Heart right ventricle (tissue), 16 donors: ENCODE measurements at regions of chr1 and their contacts with region 1.

Region 1: GRCh38 chr1:40774266-40774998 is 9.2 kb upstream of the KCNQ4 start:
- DNase-seq: peak in 1 of 2 donors; percentile 55
- ATAC-seq: peak in 6 of 8 donors; percentile 36 to 58 (median 53)
- H3K4me3 ChIP-seq: no peak overlapping the region
- H3K27ac ChIP-seq: no peak overlapping the region
- H3K4me1 ChIP-seq: peaks cover 0 to 13% (median 4%) of the 10 kb centered on the region in 9 donors
- H3K27me3 ChIP-seq: no peaks in the 10 kb centered on the region
- CTCF ChIP-seq: peak; percentile 60 to 86 (median 82)

Region 2: GRCh38 chr1:40625066-40625465 is 149.4 kb before region 1 on chr1:
- intact Hi-C with region 1: loop called in 4 of 10 experiments (anchors 10 kb)
- DNase-seq: peak; percentile 12 to 36
- ATAC-seq: peak in 7 of 8 donors; percentile 38 to 87 (median 75)
- H3K4me3 ChIP-seq: no peak overlapping the region
- H3K27ac ChIP-seq: no peak overlapping the region
- H3K4me1 ChIP-seq: no peaks in the 10 kb centered on the region
- H3K27me3 ChIP-seq: peaks cover 0 to 7% (median 0%) of the 10 kb centered on the region in 7 donors
- CTCF ChIP-seq: peak in 7 of 9 donors; percentile 41 to 55 (median 51)

Region 3: DNA sequence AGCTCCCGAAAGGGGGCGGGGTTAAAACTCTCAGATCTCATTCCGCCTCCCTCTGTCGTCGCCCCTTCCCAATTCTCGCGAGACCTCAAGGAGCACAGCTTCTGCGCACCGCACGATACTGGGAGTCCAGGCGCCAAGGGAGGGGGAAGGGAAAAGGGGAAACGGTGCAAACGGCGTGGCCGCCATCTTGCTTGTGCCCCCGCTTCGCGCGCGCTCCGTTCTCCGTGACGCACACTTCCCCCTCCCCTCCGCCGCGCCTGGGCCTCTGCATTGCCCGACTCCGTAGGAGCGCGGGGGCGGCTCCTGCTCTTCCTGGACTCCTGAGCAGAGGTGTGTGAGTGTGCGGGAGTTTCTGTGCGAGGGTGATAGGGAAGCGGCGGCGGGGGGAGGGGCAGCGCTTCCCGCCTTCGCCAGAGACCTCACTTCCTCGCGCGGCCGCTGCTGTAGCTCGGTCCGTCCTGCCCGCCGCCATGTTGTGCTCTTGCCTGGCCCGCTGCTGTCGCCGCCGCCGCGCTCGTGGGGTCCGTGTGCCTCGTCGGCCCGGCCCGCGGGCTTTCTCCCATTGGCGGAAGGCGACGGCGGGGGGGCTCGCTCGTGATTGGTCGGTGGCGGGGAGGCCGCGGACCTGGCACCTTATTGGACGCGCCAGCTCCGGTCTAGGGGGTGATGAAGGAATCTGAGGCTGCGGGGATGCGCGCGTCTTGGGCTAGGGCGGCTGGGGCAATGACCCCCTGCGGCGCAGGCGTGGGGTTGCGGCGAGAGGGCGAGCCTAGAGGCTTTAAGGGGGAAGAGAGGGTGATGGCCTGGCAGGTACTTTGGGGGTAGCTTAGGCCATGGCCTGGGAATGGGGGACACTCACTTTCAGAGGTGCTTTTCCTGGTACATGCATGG is 82.6 kb before region 1 on chr1 and contains the start of gene NFYC:
- intact Hi-C with region 1: loop called in 1 of 10 experiments (anchors 10 kb)
- DNase-seq: peak; percentile 94 to 99
- ATAC-seq: peak; percentile 94 to 98 (median 96)
- H3K4me3 ChIP-seq: peak within 1 kb of the TSS; percentile 72 to 97 (median 82)
- H3K27ac ChIP-seq: peak within 1 kb of the TSS; percentile 97 to 100 (median 99)
- H3K4me1 ChIP-seq: peaks cover 0 to 58% (median 31%) of the 10 kb centered on the region in 9 donors
- H3K27me3 ChIP-seq: no peaks in the 10 kb centered on the region
- CTCF ChIP-seq: peak in 1 of 9 donors; percentile 4
- total RNA-seq, gene NFYC: 56.1 to 84.7 (median 73.1) TPM

Region 4: GRCh38 chr1:40849801-40850592 is 75.6 kb after region 1 on chr1:
- intact Hi-C with region 1: loop called in 9 of 10 experiments (anchors 1 to 5 kb)
- DNase-seq: peak; percentile 63 to 64
- ATAC-seq: peak; percentile 79 to 92 (median 87)
- H3K4me3 ChIP-seq: no peak overlapping the region
- H3K27ac ChIP-seq: no peak overlapping the region
- H3K4me1 ChIP-seq: peaks cover 0 to 9% (median 0%) of the 10 kb centered on the region in 9 donors
- H3K27me3 ChIP-seq: no peaks in the 10 kb centered on the region
- CTCF ChIP-seq: peak; percentile 79 to 93 (median 90)